ENCODE measurements at regions of chr1 and their contacts with region 1.

Region 1: DNA sequence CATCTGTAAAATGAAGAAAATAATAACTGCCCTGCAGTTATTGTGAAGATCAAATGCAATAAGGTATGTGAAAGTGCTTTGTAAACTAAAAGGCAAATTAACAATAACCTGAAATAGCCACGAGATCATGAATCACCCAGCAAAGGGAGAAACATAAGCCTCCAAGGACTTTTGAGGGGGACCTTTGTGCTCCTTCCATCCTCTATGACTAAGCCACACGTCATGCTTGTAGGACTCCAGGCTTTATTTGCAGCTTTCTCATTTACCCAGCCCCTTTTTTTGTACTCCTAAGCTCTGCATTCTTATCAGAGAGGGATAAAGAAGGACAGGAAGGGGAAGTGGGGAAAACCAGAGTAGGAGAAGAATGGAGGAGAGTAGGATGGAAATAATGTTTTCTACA is 115.1 kb downstream of the PROX1 start:
- DNase-seq: no peak
- H3K4me3 ChIP-seq: no peak overlapping the region
- H3K27ac ChIP-seq: no peak overlapping the region
- H3K4me1 ChIP-seq: peaks cover 0 to 6% (median 1%) of the 10 kb centered on the region in 4 donors
- H3K27me3 ChIP-seq: no peaks in the 10 kb centered on the region
- CTCF ChIP-seq: no peak
- EP300 ChIP-seq: no peak
- POLR2A ChIP-seq: no peak

Region 2: GRCh38 chr1:213759359-213760181 is 343.3 kb before region 1 on chr1:
- in situ Hi-C with region 1: loop called in 1 of 4 experiments (anchors 10 kb)
- intact Hi-C with region 1: no loop called
- DNase-seq: peak; percentile 13
- H3K4me3 ChIP-seq: no peak overlapping the region
- H3K27ac ChIP-seq: no peak overlapping the region
- H3K4me1 ChIP-seq: no peaks in the 10 kb centered on the region
- H3K27me3 ChIP-seq: no peaks in the 10 kb centered on the region
- CTCF ChIP-seq: no peak
- EP300 ChIP-seq: no peak
- POLR2A ChIP-seq: no peak

Region 3: DNA sequence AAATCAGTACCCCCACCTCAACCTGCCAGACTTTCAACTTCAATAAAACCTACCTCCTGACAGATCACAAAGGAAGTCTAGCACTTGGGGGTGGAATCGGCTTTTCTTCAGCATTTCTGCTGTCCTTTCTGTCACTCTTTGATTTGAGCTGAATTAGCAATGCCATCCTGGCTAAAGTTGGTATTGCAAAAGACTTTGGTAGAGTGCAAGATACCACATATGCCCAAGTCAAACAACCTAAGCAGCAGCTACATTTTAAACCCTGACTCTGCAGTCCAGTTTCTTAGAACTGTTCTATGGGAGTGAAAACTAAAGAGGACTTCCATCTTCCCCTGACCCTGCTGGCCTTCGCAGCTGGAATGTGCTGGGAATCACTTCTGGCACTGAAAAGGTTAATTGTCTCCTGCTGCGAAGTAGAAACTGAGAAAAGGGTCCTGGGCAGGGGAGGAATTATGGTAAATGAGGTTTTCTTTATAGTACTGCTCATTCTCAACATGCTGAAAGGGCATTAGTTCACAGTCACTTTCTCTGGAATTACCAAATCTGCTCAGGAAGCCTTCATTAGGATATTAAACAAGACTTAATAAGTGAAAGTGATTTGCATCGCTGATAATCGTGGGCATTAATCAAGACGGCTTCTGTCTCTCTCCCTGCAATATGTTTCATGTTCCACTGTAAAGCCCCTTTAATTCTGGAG is 51.8 kb after region 1 on chr1:
- in situ Hi-C with region 1: loop called in 1 of 4 experiments (anchors 10 kb)
- intact Hi-C with region 1: no loop called
- DNase-seq: no peak
- H3K4me3 ChIP-seq: no peak overlapping the region
- H3K27ac ChIP-seq: no peak overlapping the region
- H3K4me1 ChIP-seq: no peaks in the 10 kb centered on the region
- H3K27me3 ChIP-seq: no peaks in the 10 kb centered on the region
- CTCF ChIP-seq: no peak
- EP300 ChIP-seq: no peak
- POLR2A ChIP-seq: no peak

Region 4: DNA sequence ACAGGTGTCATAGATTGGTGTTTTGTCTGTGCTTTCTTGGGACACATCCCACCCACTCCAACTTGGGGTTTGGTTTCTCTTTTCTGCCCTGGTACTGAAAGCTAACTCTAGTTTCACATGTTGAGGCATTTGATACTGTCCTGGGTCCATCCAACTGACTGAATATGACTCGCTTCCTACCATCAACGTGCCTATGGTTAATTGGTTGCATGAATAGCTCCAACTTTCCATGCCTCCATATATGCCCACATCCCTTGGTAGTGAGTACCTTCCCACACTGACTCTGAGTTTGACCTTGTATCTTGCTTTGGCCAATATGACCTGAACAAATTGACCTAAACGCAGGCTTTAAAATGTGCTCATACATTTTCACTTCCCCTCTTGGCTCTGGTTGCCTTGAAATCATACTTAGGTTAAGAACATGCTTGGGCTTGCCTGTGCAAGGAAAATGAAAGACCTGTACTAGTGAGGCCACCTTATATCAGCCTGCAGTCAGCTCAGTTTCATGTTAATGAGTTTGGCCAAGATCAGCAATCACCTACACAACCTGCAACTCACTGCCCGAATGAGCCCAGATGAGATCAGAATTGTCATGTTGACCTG is 898.6 kb after region 1 on chr1:
- in situ Hi-C with region 1: no loop called
- intact Hi-C with region 1: no loop called
- DNase-seq: no peak
- H3K4me3 ChIP-seq: no peak overlapping the region
- H3K27ac ChIP-seq: no peak overlapping the region
- H3K4me1 ChIP-seq: no peaks in the 10 kb centered on the region
- H3K27me3 ChIP-seq: no peaks in the 10 kb centered on the region
- CTCF ChIP-seq: no peak
- EP300 ChIP-seq: no peak
- POLR2A ChIP-seq: no peak

Region 5: GRCh38 chr1:215256936-215257679 is 1154.2 kb after region 1 on chr1:
- in situ Hi-C with region 1: no loop called
- intact Hi-C with region 1: loop called (anchors 5 kb)
- DNase-seq: no peak
- H3K4me3 ChIP-seq: no peak overlapping the region
- H3K27ac ChIP-seq: no peak overlapping the region
- H3K4me1 ChIP-seq: no peaks in the 10 kb centered on the region
- H3K27me3 ChIP-seq: no peaks in the 10 kb centered on the region
- CTCF ChIP-seq: no peak
- EP300 ChIP-seq: no peak
- POLR2A ChIP-seq: no peak